ENCODE measurements at regions of chr20 and their contacts with region 1.

Region 1: DNA sequence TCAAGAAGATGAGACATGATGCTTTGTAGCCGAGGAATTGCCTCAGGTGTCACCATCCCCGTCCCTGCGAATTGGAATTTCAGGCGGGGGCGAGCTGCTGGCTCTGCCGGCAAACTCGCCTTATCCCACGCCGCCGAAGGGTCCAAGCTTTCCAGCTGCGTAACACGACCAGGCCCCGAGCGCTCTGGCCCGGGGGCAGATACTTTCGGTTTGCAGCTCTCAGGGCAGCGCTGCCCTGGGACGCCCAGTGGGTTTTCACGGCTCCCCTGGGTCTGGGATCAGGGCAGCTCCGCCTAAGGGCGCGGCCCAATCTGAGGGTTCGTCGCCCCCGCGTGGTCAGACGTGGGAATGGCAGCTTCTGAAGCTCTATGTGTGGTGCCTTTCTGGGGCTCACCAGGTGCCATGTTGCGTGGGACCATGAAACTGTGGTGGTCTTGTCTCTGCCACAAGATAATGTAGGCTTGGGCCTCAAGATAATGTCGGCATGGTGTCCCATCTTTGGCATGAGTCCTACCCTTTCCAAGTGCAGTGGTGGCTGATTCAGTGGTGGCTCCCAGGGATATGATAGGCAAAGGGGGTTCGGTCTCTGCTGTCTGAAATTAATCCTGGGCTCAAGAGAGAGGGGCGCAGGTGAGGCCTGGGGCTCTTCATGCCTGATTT is 20.9 kb downstream of the PIGT start:
- DNase-seq: peak; percentile 63 to 93 (median 81)
- ATAC-seq: peak; percentile 98 to 99 (median 99)
- H3K4me3 ChIP-seq: peak overlapping the region; percentile 50 to 83
- H3K4me3 Mint-ChIP-seq: peak overlapping the region; percentile 80 to 82 (median 81)
- H3K27ac ChIP-seq: no peak overlapping the region
- H3K27ac Mint-ChIP-seq: peak overlapping the region; percentile 27 to 74
- H3K4me1 ChIP-seq: peaks cover 4 to 18% of the 10 kb centered on the region in 2 experiments
- H3K4me1 Mint-ChIP-seq: peaks cover 7 to 23% (median 11%) of the 10 kb centered on the region in 3 donors
- H3K27me3 ChIP-seq: no peaks in the 10 kb centered on the region
- H3K27me3 Mint-ChIP-seq: no peaks in the 10 kb centered on the region

Region 2: DNA sequence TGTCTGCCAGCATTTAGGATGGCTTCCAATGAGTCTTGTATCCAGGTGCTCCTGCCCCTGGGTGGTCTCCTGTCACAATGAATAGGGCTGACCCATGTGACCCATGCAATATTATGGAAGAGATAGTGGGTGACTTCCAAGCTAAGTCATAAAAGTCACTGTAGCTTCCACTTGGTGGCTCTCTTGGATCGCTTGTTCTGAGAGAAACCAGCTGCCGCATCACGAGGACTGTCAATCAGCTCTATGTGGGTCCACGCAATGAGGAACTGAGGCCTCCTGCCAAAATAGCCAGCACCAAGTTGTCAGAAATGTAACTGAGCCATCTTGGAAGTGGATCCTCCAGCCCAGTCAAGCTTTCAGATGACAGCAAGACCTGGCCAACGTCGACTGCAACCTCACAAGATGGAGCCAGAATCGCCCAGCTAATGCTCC is 113.9 kb before region 1 on chr20:
- CTCF ChIA-PET with region 1: interaction called, 6 to 16 read pairs
- POLR2A ChIA-PET with region 1: no interaction called
- DNase-seq: peak in 1 of 35 experiments; percentile 15
- ATAC-seq: no peak
- H3K4me3 ChIP-seq: no peak overlapping the region
- H3K4me3 Mint-ChIP-seq: no peak overlapping the region
- H3K27ac ChIP-seq: no peak overlapping the region
- H3K27ac Mint-ChIP-seq: no peak overlapping the region
- H3K4me1 ChIP-seq: peaks cover 13 to 33% of the 10 kb centered on the region in 2 experiments
- H3K4me1 Mint-ChIP-seq: peaks cover 21 to 27% (median 27%) of the 10 kb centered on the region in 3 donors
- H3K27me3 ChIP-seq: no peaks in the 10 kb centered on the region
- H3K27me3 Mint-ChIP-seq: no peaks in the 10 kb centered on the region

Region 3: GRCh38 chr20:45373353-45374100 is 63.3 kb before region 1 on chr20:
- CTCF ChIA-PET with region 1: interaction called, 12 to 86 read pairs
- POLR2A ChIA-PET with region 1: interaction called, 4 read pairs
- DNase-seq: peak; percentile 77 to 96 (median 87)
- ATAC-seq: peak; percentile 85 to 93 (median 91)
- H3K4me3 ChIP-seq: peak overlapping the region; percentile 58 to 62
- H3K4me3 Mint-ChIP-seq: peak overlapping the region; percentile 71 to 85 (median 80)
- H3K27ac ChIP-seq: peak overlapping the region; percentile 83
- H3K27ac Mint-ChIP-seq: peak overlapping the region; percentile 88 to 90
- H3K4me1 ChIP-seq: peaks cover 15 to 26% of the 10 kb centered on the region in 2 experiments
- H3K4me1 Mint-ChIP-seq: peaks cover 28 to 44% (median 39%) of the 10 kb centered on the region in 3 donors
- H3K27me3 ChIP-seq: no peaks in the 10 kb centered on the region
- H3K27me3 Mint-ChIP-seq: no peaks in the 10 kb centered on the region

Region 4: DNA sequence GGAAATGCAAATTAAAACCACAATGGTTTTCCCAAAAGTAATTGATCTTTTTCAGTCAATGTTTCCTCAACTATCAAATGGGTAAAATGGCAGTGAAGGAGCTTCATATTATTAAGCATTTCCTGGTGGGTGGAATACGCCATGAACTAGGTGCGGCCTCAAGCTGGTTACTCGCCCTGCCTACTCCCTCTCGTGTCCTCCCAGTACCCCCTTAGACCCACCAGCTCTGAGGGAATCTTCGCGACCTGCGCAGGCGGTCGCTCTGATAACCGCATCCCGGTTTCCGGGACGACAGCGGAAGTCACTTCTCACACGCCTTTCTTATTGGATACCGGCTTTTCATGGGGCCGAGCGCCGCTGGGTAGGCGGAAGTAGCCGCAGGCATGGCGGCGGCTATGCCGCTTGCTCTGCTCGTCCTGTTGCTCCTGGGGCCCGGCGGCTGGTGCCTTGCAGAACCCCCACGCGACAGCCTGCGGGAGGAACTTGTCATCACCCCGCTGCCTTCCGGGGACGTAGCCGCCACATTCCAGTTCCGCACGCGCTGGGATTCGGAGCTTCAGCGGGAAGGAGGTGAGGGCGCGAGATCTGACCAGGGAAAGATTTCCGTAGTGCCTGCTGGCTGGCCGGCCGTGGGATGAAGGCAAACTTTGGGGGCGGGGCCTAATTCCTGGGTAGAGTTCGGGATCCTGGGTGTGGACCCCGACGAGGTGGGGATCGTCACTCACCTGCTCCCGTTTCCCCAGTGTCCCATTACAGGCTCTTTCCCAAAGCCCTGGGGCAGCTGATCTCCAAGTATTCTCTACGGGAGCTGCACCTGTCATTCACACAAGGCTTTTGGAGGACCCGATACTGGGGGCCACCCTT is 20.9 kb before region 1 on chr20 and contains the start of gene PIGT:
- CTCF ChIA-PET with region 1: interaction called, 4 to 24 read pairs
- POLR2A ChIA-PET with region 1: interaction called in 1 of 2 experiments, 3 read pairs
- DNase-seq: peak; percentile 66 to 96 (median 91)
- ATAC-seq: peak; percentile 98
- H3K4me3 ChIP-seq: peak within 1 kb of the TSS; percentile 86 to 95
- H3K4me3 Mint-ChIP-seq: peak within 1 kb of the TSS; percentile 95 to 96 (median 95)
- H3K27ac ChIP-seq: peak within 1 kb of the TSS; percentile 87
- H3K27ac Mint-ChIP-seq: peak within 1 kb of the TSS; percentile 97 to 99
- H3K4me1 ChIP-seq: peaks cover 7 to 24% of the 10 kb centered on the region in 2 experiments
- H3K4me1 Mint-ChIP-seq: peaks cover 40 to 46% (median 44%) of the 10 kb centered on the region in 3 donors
- H3K27me3 ChIP-seq: no peaks in the 10 kb centered on the region
- H3K27me3 Mint-ChIP-seq: no peaks in the 10 kb centered on the region
- total RNA-seq, gene PIGT: 76.6 to 140 (median 79.4) TPM

Region 5: GRCh38 chr20:45456632-45457031 is 19.8 kb after region 1 on chr20:
- CTCF ChIA-PET with region 1: interaction called, 3 to 10 read pairs
- POLR2A ChIA-PET with region 1: no interaction called
- DNase-seq: peak in 8 of 35 experiments; percentile 10 to 43 (median 18)
- ATAC-seq: peak in 1 of 4 experiments; percentile 39
- H3K4me3 ChIP-seq: no peak overlapping the region
- H3K4me3 Mint-ChIP-seq: no peak overlapping the region
- H3K27ac ChIP-seq: no peak overlapping the region
- H3K27ac Mint-ChIP-seq: no peak overlapping the region
- H3K4me1 ChIP-seq: no peaks in the 10 kb centered on the region
- H3K4me1 Mint-ChIP-seq: no peaks in the 10 kb centered on the region
- H3K27me3 ChIP-seq: no peaks in the 10 kb centered on the region
- H3K27me3 Mint-ChIP-seq: peaks cover 3 to 4% of the 10 kb centered on the region in 2 donors

Region 6: DNA sequence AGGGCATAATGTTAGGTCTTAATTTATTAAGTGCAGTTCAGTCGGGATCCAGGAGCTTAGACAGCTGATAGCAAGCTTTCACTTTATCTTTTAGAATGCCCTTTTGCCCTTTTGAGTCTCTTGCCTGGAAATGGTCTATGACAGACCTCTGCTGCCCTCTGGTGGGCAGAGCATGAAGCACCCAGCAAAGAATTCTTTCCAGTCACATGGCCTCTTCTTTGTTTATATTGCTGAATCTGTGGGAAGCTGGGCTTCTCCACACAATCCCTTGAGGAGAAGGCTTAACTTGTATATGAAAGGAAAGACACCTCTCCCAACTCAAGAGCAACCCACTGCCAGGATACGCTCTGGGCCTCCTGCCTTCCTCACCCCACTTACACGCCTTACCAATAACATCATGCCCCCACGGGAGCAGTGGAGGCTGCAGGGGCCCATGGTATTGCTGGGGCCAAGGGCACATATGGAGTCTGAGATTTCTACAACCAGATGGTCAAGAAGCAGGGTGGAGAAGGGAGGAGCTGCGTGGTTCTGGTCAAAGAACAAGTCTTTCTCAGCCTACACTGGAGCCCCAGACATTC is 334.4 kb after region 1 on chr20:
- CTCF ChIA-PET with region 1: interaction called, 3 to 12 read pairs
- POLR2A ChIA-PET with region 1: no interaction called
- DNase-seq: peak; percentile 50 to 89 (median 74)
- ATAC-seq: peak; percentile 70 to 82 (median 74)
- H3K4me3 ChIP-seq: no peak overlapping the region
- H3K4me3 Mint-ChIP-seq: no peak overlapping the region
- H3K27ac ChIP-seq: no peak overlapping the region
- H3K27ac Mint-ChIP-seq: peak overlapping the region in 1 of 2 donors; percentile 52
- H3K4me1 ChIP-seq: peaks cover 0 to 3% of the 10 kb centered on the region in 2 experiments
- H3K4me1 Mint-ChIP-seq: peaks cover 0 to 5% (median 5%) of the 10 kb centered on the region in 3 donors
- H3K27me3 ChIP-seq: peaks cover 0 to 19% of the 10 kb centered on the region in 2 experiments
- H3K27me3 Mint-ChIP-seq: peaks cover 9 to 26% of the 10 kb centered on the region in 2 donors

Measured in T-cell (primary cell).